HCT116 (cell line): ENCODE measurements at regions of chr17 and their contacts with region 1.

Region 1: GRCh38 chr17:28726226-28727130 is at the start of gene TLCD1:
- DNase-seq: peak; percentile 89
- ATAC-seq: peak; percentile 50
- H3K4me3 ChIP-seq: peak within 1 kb of the TSS; percentile 59 to 71
- H3K27ac ChIP-seq: peak within 1 kb of the TSS; percentile 89
- H3K4me1 ChIP-seq: peaks cover 40 to 79% of the 10 kb centered on the region in 2 experiments
- H3K27me3 ChIP-seq: no peaks in the 10 kb centered on the region
- CTCF ChIP-seq: peak; percentile 99
- POLR2A ChIP-seq: no peak
- RAD21 ChIP-seq: peak; percentile 100
- total RNA-seq, gene TLCD1: 28.3 TPM

Region 2: DNA sequence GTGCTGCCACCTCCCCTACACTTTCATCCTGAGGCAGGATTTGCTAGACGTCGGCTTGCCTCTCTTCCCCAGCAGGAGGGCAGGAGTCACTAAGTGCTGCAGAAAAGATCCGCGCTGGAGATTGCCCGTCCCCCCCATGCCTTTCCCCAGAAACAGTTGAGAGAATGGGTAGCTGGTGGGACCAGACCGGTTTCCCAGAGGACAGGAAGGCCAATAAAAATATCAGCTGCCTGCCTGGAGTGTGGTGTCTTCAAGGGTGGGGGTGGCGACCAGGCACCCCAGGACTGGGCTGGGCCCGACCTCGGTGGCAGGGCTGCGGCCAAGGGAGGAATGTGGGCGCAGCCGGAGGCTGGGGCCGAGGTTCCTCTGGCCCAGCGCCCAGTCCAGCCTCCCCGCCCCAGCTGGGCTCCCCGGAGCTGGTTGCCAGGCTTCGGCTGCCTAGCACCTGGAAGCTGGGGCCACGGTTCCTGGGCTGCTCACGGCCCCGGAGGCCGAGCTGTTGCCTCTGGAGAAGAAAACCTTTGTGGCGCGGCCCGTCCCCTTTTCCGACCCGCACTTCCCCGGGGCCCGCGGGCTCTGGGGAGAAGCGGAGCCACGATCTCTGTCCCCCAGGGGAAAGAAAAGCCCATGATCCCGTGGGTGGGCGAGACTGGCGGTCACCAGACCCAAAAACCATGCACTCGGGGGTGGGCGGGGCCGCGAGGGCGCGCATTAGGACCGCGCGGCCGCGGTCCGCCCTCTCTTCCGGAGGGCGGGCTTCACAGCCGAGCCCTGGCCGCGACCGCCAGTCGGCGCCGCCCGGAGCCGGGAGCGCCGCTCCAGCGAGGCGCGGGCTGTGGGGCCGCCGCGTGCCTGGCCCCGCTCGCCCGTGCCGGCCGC is 17.0 kb after region 1 on chr17 and contains the start of gene TRAF4:
- CTCF ChIA-PET with region 1: interaction called, 207 read pairs
- POLR2A ChIA-PET with region 1: interaction called, 149 read pairs
- RAD21 ChIA-PET with region 1: interaction called, 8 to 19 read pairs
- intact Hi-C with region 1: loop called (anchors 1 kb)
- DNase-seq: peak; percentile 79
- ATAC-seq: peak; percentile 75
- H3K4me3 ChIP-seq: peak within 1 kb of the TSS; percentile 97 to 100
- H3K27ac ChIP-seq: peak within 1 kb of the TSS; percentile 98
- H3K4me1 ChIP-seq: peaks cover 34 to 50% of the 10 kb centered on the region in 2 experiments
- H3K27me3 ChIP-seq: no peaks in the 10 kb centered on the region
- CTCF ChIP-seq: 0 out of 6 replicates have a peak, but pooled peaks of 1 of the 3 experiments have one; percentile 1
- POLR2A ChIP-seq: peak; percentile 97
- RAD21 ChIP-seq: no peak
- total RNA-seq, gene TRAF4: 127 TPM

Region 3: GRCh38 chr17:28763804-28764266 is 37.4 kb after region 1 on chr17:
- CTCF ChIA-PET with region 1: interaction called, 61 read pairs
- POLR2A ChIA-PET with region 1: interaction called, 6 read pairs
- RAD21 ChIA-PET with region 1: interaction called, 6 to 7 read pairs
- intact Hi-C with region 1: no loop called
- DNase-seq: peak; percentile 53
- ATAC-seq: peak; percentile 78
- H3K4me3 ChIP-seq: no peak overlapping the region
- H3K27ac ChIP-seq: no peak overlapping the region
- H3K4me1 ChIP-seq: peaks cover 0 to 13% of the 10 kb centered on the region in 2 experiments; a peak in 3 of 4 replicates
- H3K27me3 ChIP-seq: no peaks in the 10 kb centered on the region
- CTCF ChIP-seq: peak; percentile 79 to 95 (median 85)
- POLR2A ChIP-seq: no peak
- RAD21 ChIP-seq: peak; percentile 89

Region 4: GRCh38 chr17:28878981-28879380 is 152.5 kb after region 1 on chr17:
- CTCF ChIA-PET with region 1: interaction called, 40 read pairs
- POLR2A ChIA-PET with region 1: interaction called, 5 read pairs
- RAD21 ChIA-PET with region 1: interaction called, 4 to 7 read pairs
- intact Hi-C with region 1: loop called (anchors 1 kb)
- DNase-seq: peak; percentile 67
- ATAC-seq: peak; percentile 99
- H3K4me3 ChIP-seq: no peak overlapping the region
- H3K27ac ChIP-seq: no peak overlapping the region
- H3K4me1 ChIP-seq: no peaks in the 10 kb centered on the region; a peak in 1 of 4 replicates
- H3K27me3 ChIP-seq: no peaks in the 10 kb centered on the region
- CTCF ChIP-seq: peak; percentile 71 to 87 (median 76)
- POLR2A ChIP-seq: no peak
- RAD21 ChIP-seq: peak; percentile 92

Region 5: GRCh38 chr17:28916302-28916934 is 189.9 kb after region 1 on chr17:
- CTCF ChIA-PET with region 1: interaction called, 16 read pairs
- POLR2A ChIA-PET with region 1: interaction called, 4 read pairs
- RAD21 ChIA-PET with region 1: no interaction called
- intact Hi-C with region 1: loop called (anchors 1 kb)
- DNase-seq: peak; percentile 13
- ATAC-seq: peak; percentile 88
- H3K4me3 ChIP-seq: no peak overlapping the region
- H3K27ac ChIP-seq: no peak overlapping the region
- H3K4me1 ChIP-seq: no peaks in the 10 kb centered on the region
- H3K27me3 ChIP-seq: no peaks in the 10 kb centered on the region
- CTCF ChIP-seq: peak; percentile 52 to 65 (median 62); a peak in 5 of 6 replicates
- POLR2A ChIP-seq: no peak
- RAD21 ChIP-seq: peak; percentile 72

Region 6: DNA sequence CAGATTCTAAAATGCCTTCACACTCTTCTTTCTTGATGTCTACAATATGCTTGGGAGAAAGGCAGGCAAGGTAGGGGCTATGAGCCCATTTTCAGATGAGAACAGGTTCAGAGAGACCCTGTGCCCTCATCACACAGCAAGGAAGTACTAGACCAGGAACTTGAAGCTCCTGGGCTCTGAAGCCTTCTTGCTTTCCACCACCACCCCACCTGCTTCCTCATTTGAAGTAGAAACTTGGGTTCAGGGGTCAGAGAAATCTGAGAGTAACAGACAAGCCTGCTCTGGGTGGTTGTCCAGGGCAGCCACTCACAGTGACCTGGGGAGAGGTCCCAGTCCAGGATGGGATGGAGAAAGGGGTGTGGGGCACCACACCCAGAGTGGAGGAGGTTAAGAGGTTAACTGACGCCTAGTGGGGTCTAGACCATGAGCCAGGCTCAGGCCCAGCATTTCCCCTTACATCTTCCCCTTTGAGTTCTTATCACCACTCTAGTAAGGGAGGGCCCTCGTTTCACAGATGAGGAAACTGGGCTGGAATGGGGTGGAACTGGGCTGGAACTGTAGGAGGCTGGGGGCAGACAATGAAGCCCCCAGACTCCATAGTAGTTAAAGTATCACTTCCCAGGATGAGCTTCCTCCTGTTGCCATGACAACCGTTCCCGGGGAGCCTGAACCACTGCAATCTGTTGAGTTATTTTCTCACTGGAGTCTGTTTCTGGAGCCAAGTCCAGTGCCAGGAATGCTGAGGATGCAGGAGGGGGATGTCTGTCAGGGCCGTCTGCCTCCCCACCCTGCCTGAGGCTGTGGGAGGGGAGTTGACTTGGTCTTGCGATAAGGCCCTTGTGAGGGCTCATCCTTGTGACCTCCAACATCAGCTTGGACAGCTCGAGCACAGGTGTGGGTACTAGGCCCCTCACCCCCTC is 241.0 kb after region 1 on chr17:
- CTCF ChIA-PET with region 1: interaction called, 21 read pairs
- POLR2A ChIA-PET with region 1: interaction called, 3 read pairs
- RAD21 ChIA-PET with region 1: interaction called, 3 read pairs
- intact Hi-C with region 1: no loop called
- DNase-seq: no peak
- ATAC-seq: no peak
- H3K4me3 ChIP-seq: no peak overlapping the region
- H3K27ac ChIP-seq: no peak overlapping the region
- H3K4me1 ChIP-seq: peaks cover 3 to 15% of the 10 kb centered on the region in 2 experiments; a peak in 3 of 4 replicates
- H3K27me3 ChIP-seq: no peaks in the 10 kb centered on the region
- CTCF ChIP-seq: no peak
- POLR2A ChIP-seq: no peak
- RAD21 ChIP-seq: no peak

Region 7: GRCh38 chr17:29116804-29117772 is 390.6 kb after region 1 on chr17:
- CTCF ChIA-PET with region 1: interaction called, 34 read pairs
- POLR2A ChIA-PET with region 1: interaction called, 4 read pairs
- RAD21 ChIA-PET with region 1: interaction called, 3 to 4 read pairs
- intact Hi-C with region 1: loop called (anchors 5 kb)
- DNase-seq: no peak
- ATAC-seq: peak; percentile 77
- H3K4me3 ChIP-seq: no peak overlapping the region
- H3K27ac ChIP-seq: no peak overlapping the region
- H3K4me1 ChIP-seq: 0 out of 4 replicates have a peak, but pooled peaks cover 0 to 3% of the 10 kb centered on the region in 2 experiments
- H3K27me3 ChIP-seq: no peaks in the 10 kb centered on the region
- CTCF ChIP-seq: peak; percentile 65 to 94 (median 90); a peak in 5 of 6 replicates
- POLR2A ChIP-seq: no peak
- RAD21 ChIP-seq: peak; percentile 77